Left ventricle myocardium inferior (tissue), 1 donor: ENCODE measurements at regions of chr11 and their contacts with region 1.

Region 1: DNA sequence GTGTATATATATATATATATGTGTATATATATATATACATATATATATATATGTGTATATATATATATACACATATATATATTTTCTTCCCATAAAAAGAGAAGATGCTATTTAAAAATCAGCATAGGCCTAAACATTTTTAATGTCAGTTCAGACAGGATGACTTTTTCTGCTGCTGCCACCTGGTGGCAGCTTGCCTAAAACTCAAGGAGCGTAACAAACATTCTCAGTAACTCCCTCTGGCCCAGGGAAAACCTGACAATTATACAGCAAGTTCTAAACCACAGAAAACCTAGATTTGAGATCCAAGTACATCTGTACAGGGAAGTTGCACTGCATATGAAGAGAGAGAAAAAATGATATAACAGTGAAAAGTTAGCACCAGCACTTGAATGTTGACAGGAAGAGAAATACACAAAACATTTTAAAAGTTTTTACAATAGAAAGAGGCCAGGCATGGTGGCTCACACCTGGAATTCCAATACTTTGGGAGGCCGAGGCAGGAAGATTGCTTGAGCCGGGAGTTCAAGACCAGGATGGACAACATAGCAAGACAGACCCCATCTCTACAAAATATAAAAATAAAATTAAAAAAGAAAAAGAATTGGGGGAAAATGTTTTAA is 16.6 kb downstream of the OR8A1 start:
- DNase-seq: peak; percentile 45
- H3K4me3 ChIP-seq: no peak overlapping the region
- H3K27ac ChIP-seq: no peak overlapping the region
- H3K4me1 ChIP-seq: no peaks in the 10 kb centered on the region
- H3K27me3 ChIP-seq: peaks cover 28% of the 10 kb centered on the region
- CTCF ChIP-seq: peak; percentile 71

Region 2: GRCh38 chr11:124070915-124071635 is 515.3 kb before region 1 on chr11:
- intact Hi-C with region 1: loop called (anchors 5 kb)
- DNase-seq: peak; percentile 32
- H3K4me3 ChIP-seq: no peak overlapping the region
- H3K27ac ChIP-seq: no peak overlapping the region
- H3K4me1 ChIP-seq: peaks cover 4% of the 10 kb centered on the region
- H3K27me3 ChIP-seq: peaks cover 95% of the 10 kb centered on the region
- CTCF ChIP-seq: peak; percentile 83

Region 3: DNA sequence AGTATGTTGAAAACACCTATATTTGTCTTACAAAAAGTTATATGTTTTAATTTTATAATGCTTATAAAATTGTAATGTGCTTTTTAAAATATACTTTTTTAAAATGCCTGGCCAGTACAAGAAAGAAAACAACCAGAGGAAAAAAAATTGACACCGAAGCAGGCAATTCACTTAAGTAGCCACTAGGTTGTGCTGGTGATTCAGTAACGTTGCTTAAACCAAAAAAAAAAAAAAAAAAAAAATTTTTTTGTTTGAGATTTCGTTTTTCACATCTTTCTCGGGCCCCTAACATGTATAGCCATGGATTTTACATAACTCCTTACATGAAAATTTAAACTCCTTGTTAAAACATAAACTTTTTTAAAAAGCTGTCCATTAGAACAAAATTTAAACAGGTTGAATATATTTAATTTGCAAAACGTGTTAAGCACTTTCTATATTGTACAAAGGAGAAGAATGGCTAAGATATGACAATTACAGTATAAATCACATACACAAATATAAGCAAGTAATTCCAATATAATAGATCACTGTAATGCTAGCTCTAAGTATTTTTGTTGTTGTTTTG is 170.9 kb before region 1 on chr11:
- intact Hi-C with region 1: loop called (anchors 5 kb)
- DNase-seq: no peak
- H3K4me3 ChIP-seq: no peak overlapping the region
- H3K27ac ChIP-seq: no peak overlapping the region
- H3K4me1 ChIP-seq: no peaks in the 10 kb centered on the region
- H3K27me3 ChIP-seq: peaks cover 56% of the 10 kb centered on the region
- CTCF ChIP-seq: peak; percentile 85